Activated CD4-positive, alpha-beta memory T cell treated with anti-CD3 and anti-CD28 coated beads for 36 hours (primary cell): ENCODE measurements at regions of chr6 and their contacts with region 1.

Region 1: GRCh38 chr6:17987576-17988421 is at the start of gene KIF13A:
- DNase-seq: peak; percentile 67
- H3K4me3 Mint-ChIP-seq: peak within 1 kb of the TSS; percentile 73
- H3K27ac Mint-ChIP-seq: no peak within 1 kb of the TSS
- H3K4me1 Mint-ChIP-seq: peaks cover 10% of the 10 kb centered on the region
- H3K27me3 Mint-ChIP-seq: peaks cover 56% of the 10 kb centered on the region
- total RNA-seq, gene KIF13A: 0.07 TPM in 1 of 2 experiments, not detected in the other

Region 2: GRCh38 chr6:17884498-17885478 is 103.0 kb before region 1 on chr6:
- CTCF ChIA-PET with region 1: no interaction called
- POLR2A ChIA-PET with region 1: no interaction called
- intact Hi-C with region 1: loop called (anchors 2 kb)
- DNase-seq: no peak
- H3K4me3 Mint-ChIP-seq: no peak overlapping the region
- H3K27ac Mint-ChIP-seq: no peak overlapping the region
- H3K4me1 Mint-ChIP-seq: peaks cover 20% of the 10 kb centered on the region
- H3K27me3 Mint-ChIP-seq: peaks cover 36% of the 10 kb centered on the region